B cell (primary cell): ENCODE measurements at regions of chr19 and their contacts with region 1.

Region 1: GRCh38 chr19:35347171-35347929 is at the start of gene FFAR1:
- DNase-seq: peak; percentile 93
- ATAC-seq: peak; percentile 62
- H3K4me3 ChIP-seq: peak within 1 kb of the TSS in 3 of 5 experiments; percentile 12 to 18 (median 17)
- H3K4me3 Mint-ChIP-seq: peak within 1 kb of the TSS; percentile 82
- H3K27ac ChIP-seq: peak within 1 kb of the TSS; percentile 91 to 92
- H3K27ac Mint-ChIP-seq: peak within 1 kb of the TSS; percentile 96
- H3K4me1 ChIP-seq: peaks cover 72 to 87% of the 10 kb centered on the region in 2 donors
- H3K4me1 Mint-ChIP-seq: peaks cover 75% of the 10 kb centered on the region
- H3K27me3 ChIP-seq: no peaks in the 10 kb centered on the region
- H3K27me3 Mint-ChIP-seq: no peaks in the 10 kb centered on the region
- CTCF ChIP-seq: no peak
- total RNA-seq, gene FFAR1: 3.0 and 3.3 TPM in 2 replicates

Region 2: DNA sequence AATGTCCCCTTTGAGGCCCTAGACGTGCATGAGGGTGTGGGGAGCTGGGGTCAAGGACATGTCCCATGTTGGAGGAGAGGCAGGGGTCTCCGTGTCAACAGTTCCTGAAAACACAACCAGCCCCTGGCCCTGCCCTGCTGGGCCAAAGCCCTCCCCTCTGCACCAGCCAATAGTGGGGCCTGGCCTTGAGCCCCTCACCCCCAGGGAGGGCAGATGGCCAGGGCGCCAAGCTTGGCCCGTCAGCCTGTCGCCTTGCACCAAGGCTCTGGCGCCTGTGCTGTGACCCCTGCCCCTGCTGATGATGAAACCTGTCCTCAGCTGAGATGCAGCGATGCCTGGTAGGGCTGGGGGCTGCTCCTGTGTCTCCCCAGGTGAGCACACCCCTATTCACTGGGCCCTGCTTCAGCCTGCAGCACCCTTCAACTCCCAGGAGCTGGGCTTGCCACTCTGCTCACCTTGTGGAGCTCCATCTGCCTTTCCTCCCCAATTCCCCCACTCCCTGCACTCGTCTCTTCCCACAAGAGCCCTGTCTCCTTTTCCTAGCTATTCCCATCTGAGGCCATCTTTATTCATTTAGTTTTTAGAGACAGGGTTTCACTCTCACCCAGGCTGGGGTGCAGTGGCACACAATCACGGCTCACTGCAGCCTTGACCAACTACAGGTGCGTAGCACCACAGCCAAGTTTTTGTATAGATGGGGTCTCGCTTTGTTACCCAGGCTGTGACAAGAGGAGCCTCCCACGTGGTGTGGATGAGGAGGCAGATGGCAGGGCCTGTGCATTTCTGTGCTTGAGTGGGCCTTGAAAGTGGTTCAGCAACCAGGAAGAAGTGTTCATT is 67.1 kb before region 1 on chr19:
- CTCF ChIA-PET with region 1: interaction called, 5 read pairs
- POLR2A ChIA-PET with region 1: interaction called, 8 read pairs
- intact Hi-C with region 1: loop called (anchors 5 kb)
- DNase-seq: peak; percentile 59
- ATAC-seq: peak; percentile 36
- H3K4me3 ChIP-seq: no peak overlapping the region
- H3K4me3 Mint-ChIP-seq: peak overlapping the region; percentile 10
- H3K27ac ChIP-seq: peak overlapping the region in 1 of 2 donors; percentile 30
- H3K27ac Mint-ChIP-seq: peak overlapping the region; percentile 43
- H3K4me1 ChIP-seq: peaks cover 38 to 42% of the 10 kb centered on the region in 2 donors
- H3K4me1 Mint-ChIP-seq: peaks cover 47% of the 10 kb centered on the region
- H3K27me3 ChIP-seq: no peaks in the 10 kb centered on the region
- H3K27me3 Mint-ChIP-seq: no peaks in the 10 kb centered on the region
- CTCF ChIP-seq: no peak

Region 3: DNA sequence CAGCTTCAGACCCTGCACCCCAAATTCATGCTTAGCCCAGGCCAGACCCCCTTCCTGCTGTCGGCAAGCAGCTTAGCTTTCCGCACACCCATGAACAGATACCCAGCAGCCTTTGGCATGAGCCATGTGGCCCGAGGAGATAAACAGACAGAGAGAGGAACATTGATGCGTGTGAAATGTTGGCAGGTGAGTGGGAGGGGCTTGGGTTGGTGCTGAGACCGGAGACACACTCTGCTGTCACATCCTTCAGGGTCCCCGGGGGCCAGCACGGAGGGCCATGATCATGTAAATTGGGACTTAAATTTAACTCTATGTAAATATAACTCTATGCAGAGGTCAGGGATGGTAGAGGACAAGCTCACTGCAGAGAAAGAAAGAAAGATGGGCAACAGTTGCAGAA is 16.9 kb before region 1 on chr19:
- CTCF ChIA-PET with region 1: interaction called, 24 read pairs
- POLR2A ChIA-PET with region 1: interaction called, 12 read pairs
- intact Hi-C with region 1: loop called (anchors 1 kb)
- DNase-seq: peak; percentile 94
- ATAC-seq: peak; percentile 84
- H3K4me3 ChIP-seq: peak overlapping the region; percentile 83 to 100 (median 89)
- H3K4me3 Mint-ChIP-seq: peak overlapping the region; percentile 93
- H3K27ac ChIP-seq: peak overlapping the region; percentile 79 to 90
- H3K27ac Mint-ChIP-seq: peak overlapping the region; percentile 96
- H3K4me1 ChIP-seq: peaks cover 68 to 83% of the 10 kb centered on the region in 2 donors
- H3K4me1 Mint-ChIP-seq: peaks cover 75% of the 10 kb centered on the region
- H3K27me3 ChIP-seq: no peaks in the 10 kb centered on the region
- H3K27me3 Mint-ChIP-seq: no peaks in the 10 kb centered on the region
- CTCF ChIP-seq: no peak

Region 4: DNA sequence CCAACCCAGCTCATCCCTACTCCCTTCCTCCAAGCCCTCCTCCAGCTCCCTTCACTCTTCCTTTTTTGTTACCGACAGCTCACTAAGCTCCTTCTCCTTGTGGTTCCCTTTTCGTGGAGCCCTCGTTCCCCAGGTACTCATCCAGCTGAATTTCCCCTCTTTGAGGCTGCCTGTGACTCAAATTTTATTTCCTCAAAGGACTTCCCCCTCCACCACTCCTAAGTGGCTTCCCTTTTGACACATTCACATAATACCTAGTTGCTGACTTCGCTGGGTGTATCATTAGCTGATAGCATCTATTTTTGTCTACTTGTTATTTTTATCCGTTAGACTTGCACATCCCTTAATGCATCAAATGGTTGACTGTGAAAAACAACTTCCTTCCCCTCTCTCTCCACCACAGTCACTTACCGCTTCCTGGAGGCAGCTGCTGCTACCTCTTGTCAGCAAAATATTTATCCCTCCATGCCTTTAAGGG is 115.2 kb after region 1 on chr19:
- CTCF ChIA-PET with region 1: interaction called, 234 read pairs
- POLR2A ChIA-PET with region 1: interaction called, 6 read pairs
- intact Hi-C with region 1: loop called (anchors 1 kb)
- DNase-seq: peak; percentile 88
- ATAC-seq: peak; percentile 78
- H3K4me3 ChIP-seq: peak overlapping the region in 3 of 5 experiments; percentile 1 to 24 (median 12)
- H3K4me3 Mint-ChIP-seq: peak overlapping the region; percentile 79
- H3K27ac ChIP-seq: peak overlapping the region; percentile 52 to 71
- H3K27ac Mint-ChIP-seq: peak overlapping the region; percentile 86
- H3K4me1 ChIP-seq: peaks cover 60 to 67% of the 10 kb centered on the region in 2 donors
- H3K4me1 Mint-ChIP-seq: peaks cover 62% of the 10 kb centered on the region
- H3K27me3 ChIP-seq: no peaks in the 10 kb centered on the region
- H3K27me3 Mint-ChIP-seq: no peaks in the 10 kb centered on the region
- CTCF ChIP-seq: no peak